ENCODE measurements at regions of chr17 and their contacts with region 1.

Region 1: GRCh38 chr17:34651402-34651811 is 72.0 kb downstream of the TMEM132E start:
- DNase-seq: no peak
- H3K4me3 ChIP-seq: no peak overlapping the region
- CTCF ChIP-seq: no peak
- POLR2A ChIP-seq: no peak

Region 2: DNA sequence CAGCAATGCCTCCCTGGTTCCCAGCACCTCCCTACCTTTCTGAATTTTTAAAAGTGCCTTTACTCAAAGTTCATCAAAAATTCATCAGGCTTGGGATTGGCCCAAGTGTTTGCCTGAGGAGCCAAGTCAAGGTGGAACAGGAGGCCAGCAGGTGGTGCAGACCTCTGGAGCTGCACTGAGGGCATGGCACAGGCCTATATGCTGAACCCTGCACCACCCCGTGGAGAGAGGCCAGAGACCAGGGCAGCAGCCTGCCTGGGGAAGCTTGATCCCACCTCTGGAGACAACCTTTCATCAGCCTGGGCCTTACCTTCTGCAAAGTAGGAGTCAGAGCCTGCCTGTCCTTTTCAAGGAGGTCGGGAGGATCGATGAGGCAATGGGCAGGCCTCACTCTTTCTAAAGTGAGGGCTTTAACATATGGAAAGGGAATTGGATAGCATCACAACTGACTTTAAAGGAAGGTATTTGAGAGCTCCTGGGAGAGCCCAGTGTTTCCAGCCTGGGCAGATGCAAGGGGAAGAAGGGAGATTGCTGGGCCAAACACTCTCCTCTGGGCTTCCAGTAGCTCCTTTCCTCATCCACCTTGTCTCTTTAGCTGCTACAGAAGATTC is 103.8 kb before region 1 on chr17:
- intact Hi-C with region 1: no loop called
- DNase-seq: peak in 1 of 2 donors; percentile 82
- H3K4me3 ChIP-seq: no peak overlapping the region
- CTCF ChIP-seq: no peak
- POLR2A ChIP-seq: no peak

Region 3: DNA sequence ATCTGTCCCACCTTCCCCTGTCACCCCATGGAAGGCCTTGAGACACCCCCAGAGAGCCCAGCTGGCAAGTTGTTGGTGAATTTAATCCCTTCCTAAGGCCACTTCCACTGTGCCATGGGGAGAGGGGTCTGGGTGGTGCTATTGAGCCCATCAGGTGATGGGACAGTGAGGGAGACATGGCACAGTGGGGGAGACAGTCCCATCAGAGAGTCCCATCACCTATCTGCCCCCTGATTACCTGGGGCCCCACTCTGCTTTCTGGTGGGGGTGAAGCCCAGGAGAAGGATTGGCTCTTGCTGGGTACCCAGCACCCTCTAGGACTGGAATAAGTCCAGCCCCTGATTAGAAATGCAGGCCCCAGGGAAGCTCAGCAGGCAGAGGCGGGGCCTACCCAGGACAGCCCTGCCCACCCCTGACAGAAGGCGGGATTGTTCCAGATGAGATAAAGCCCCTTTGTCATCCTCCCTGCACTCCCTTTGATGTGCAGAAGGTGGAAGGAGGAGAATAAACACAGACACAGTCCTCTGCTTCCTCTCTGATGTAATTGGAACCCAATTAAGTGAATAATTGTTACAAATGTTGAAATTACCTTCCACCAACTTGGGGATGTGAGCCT is 53.1 kb before region 1 on chr17:
- intact Hi-C with region 1: no loop called
- DNase-seq: no peak
- H3K4me3 ChIP-seq: no peak overlapping the region
- CTCF ChIP-seq: no peak
- POLR2A ChIP-seq: no peak

Region 4: DNA sequence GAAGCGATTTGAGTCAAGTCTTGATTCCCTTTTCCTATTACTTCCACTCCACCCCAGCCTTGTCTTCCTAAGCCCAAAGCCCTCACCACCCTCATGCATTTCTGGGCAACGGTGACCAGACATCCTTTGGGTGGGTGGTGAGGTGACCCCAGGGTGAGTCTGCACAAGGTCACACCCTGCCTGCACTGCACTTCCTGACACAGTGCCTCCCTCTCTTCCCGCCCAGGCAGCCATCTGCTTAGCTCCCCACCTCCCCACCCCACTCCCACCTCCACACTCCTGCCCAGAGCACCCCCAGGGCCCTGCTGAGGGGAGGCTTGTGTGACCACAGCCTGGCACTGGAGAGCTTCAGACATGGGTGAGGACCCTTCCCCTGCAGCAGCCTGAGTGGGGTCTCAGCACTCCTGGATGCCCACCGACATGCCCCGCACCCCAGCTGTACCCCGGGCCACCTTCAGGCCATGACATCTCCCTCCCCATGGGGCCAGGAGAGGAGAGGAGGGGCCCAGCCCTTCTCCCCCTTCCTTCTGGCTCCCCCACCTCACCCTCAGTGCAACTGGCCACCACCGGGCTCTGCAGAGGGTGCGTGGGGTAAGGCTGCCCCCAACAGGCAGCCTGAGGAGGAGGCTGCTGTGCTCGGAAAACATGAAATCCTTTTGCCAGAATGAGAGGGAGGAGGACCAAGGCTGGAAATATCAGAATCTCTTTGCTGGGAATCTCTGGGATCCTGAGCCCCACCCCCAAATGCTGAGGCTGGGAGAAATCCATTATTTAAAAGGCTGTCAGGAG is 241.2 kb after region 1 on chr17:
- intact Hi-C with region 1: loop called (anchors 10 kb)
- DNase-seq: no peak
- H3K4me3 ChIP-seq: no peak overlapping the region
- CTCF ChIP-seq: no peak
- POLR2A ChIP-seq: no peak